Activated CD8-positive, alpha-beta memory T cell treated with anti-CD3 and anti-CD28 coated beads, Interleukin-2, amount 10 ng/mL, durations not matched to agents 7 days and 5 days (primary cell): ENCODE measurements at regions of chr1 and their contacts with region 1.

Region 1: DNA sequence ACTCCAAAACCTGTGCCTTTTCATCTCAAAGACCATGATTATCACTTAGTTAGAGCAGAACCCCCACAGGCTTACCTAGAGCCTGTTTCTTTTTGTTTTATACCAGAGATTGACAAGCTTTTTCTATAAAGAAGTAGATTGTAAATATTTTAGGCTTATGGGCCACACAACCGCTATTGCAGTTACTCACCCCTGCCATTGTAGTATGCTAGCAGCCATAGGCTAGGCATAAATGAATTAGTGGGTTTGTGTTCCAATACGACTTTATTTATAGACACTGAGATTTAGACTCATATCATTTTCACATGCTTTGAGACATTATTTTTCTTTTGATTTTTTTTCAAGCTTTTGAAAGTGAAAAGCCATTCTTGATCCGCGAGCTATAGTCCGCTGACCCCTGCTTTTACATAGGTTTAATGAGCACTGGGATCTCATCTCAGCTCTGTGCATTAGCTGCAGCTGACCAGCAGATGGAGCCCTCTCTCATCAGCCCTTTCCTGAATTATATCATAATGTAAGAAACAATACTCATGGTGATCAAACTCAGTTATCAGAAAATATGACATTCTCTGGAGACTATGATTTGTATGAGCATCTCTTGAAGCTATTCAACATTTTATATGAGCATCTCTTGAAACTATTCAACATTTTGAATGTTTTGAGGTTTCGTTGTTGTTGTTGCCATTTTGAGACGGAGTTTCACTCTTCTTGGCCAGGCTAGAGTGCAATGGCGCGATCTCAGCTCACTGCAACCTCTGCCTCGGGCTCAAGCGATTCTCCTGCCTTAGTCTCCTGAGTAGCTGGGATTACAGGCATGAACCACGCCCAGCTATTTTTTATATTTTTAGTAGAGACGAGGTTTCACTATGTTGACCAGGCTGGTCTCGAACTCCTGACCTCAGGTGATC is 111.9 kb upstream of the L1TD1 start:
- DNase-seq: peak; percentile 55
- ATAC-seq: peak; percentile 65
- H3K4me3 Mint-ChIP-seq: no peak overlapping the region
- H3K27ac Mint-ChIP-seq: no peak overlapping the region
- H3K4me1 Mint-ChIP-seq: no peaks in the 10 kb centered on the region
- H3K27me3 Mint-ChIP-seq: no peaks in the 10 kb centered on the region

Region 2: DNA sequence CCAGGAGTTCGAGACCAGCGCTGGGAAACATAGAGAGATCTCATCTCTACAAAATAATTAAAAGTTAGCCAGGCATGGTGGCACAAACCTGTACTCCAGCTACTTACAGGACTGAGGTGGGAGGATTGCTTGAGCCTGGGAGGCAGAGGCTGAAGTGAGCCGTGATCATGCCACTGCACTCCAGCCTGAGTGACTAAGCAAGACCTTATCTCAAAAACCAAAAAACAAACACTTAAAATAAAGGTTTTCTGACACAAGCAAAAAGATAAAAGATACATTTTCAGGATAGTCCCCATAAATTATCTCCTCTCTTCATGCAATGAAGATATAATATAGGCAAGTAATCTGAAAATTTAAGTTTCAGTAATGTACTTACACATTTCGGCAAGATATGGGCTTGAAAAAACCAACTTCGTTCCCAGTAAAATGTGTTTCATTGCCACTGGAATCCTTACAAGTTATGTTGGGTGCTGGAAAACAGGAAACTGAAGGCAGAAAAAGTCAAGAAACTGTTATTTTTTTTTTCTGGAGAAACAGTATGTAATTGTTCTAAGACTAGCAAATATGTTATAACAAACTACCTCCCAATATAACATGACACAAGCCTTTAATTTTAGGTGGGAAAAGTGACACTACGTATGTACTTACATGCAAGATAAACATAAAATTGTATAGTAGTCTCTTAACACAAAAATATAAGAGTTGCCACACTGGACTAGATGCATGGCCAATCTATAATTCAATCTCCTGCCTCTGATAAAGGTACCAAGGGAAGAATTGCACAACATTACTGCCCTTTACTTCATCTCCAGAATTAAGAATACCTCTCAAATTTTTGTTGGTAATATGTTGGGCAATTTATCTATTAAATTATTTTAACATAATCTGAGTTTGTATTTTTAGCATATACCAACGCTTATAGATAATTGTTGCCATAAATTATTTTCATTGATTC is 373.5 kb before region 1 on chr1:
- CTCF ChIA-PET with region 1: no interaction called
- DNase-seq: no peak
- ATAC-seq: no peak
- H3K4me3 Mint-ChIP-seq: no peak overlapping the region
- H3K27ac Mint-ChIP-seq: no peak overlapping the region
- H3K4me1 Mint-ChIP-seq: peaks cover 2% of the 10 kb centered on the region
- H3K27me3 Mint-ChIP-seq: no peaks in the 10 kb centered on the region

Region 3: DNA sequence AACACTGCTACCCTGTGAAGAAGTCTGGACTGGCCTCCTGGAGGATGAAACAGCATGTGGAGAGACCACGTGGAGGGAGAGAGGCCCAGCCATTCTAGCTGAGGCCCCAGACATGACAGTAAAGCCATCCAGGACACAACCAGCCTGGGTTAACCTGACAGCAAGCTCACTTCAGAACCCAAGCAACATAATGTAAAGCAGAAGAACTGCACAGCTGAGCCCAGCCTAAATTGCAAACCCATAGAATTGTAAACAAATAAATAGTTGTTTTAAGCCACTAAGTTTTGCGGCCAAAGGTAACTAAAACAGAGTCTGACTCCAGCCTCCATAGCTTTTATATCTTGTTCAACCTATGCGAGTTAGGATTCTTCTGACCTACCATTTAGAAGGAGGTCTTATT is 14.8 kb after region 1 on chr1:
- CTCF ChIA-PET with region 1: interaction called, 11 read pairs
- DNase-seq: no peak
- ATAC-seq: no peak
- H3K4me3 Mint-ChIP-seq: no peak overlapping the region
- H3K27ac Mint-ChIP-seq: no peak overlapping the region
- H3K4me1 Mint-ChIP-seq: no peaks in the 10 kb centered on the region
- H3K27me3 Mint-ChIP-seq: no peaks in the 10 kb centered on the region

Region 4: DNA sequence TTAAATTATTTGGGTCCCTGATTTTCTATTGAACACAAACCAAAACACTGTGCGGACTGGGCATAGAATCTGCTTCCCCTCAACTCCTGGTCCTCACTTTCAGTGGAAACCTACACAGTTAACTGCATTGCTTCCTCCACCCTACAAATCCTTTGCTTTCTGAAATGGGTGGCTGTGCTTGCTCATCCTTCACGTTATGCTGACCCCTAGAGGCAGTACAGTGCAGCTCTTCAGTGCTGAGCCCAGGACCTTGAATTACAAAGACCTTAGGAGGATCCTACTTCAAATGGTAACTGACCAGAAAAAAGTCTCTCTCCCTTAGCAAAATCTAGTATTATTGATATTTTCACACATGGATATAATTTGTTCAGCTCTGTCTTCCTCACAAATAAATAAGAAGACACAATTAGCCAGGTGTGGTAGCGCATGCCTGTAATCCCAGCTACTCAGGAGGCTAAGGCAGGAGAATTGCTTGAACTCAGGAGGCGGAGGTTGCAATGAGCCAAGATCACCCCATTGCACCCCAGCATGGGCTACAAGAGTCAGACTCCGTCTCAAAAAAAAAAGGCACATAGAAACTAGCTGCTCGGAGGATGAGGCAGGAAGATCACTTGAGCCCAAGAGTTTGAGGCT is 48.5 kb after region 1 on chr1:
- CTCF ChIA-PET with region 1: interaction called, 31 read pairs
- DNase-seq: peak; percentile 57
- ATAC-seq: peak; percentile 80
- H3K4me3 Mint-ChIP-seq: no peak overlapping the region
- H3K27ac Mint-ChIP-seq: no peak overlapping the region
- H3K4me1 Mint-ChIP-seq: no peaks in the 10 kb centered on the region
- H3K27me3 Mint-ChIP-seq: no peaks in the 10 kb centered on the region

Region 5: DNA sequence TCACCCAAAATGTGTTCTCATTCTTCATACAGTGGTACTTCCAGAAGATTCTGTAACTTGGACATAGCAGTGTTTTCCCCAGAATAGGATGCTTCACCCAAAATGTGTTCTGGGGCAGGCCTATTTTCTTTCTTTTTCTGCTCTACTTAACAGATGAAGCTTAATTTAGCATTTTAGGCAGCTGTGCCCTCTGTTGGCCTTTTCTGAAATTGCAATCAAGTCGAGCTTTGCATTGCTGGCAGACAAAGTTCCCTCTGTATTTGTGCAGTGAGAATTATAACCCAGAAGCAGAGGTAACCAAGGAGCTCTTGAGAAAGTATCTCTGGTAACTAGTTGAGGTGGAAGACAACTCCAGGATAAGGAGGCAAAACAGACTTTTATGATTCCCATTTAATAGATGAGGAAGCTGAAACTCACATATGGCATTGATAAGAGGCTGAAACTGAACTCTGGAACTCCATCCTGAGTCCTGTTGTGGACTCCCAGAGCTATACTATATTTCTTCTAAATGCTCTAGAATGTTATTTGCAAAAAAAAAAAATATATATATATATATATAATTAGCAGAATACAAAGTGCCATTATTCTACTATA is 61.6 kb after region 1 on chr1:
- CTCF ChIA-PET with region 1: interaction called, 19 read pairs
- DNase-seq: peak; percentile 63
- ATAC-seq: peak; percentile 42
- H3K4me3 Mint-ChIP-seq: no peak overlapping the region
- H3K27ac Mint-ChIP-seq: no peak overlapping the region
- H3K4me1 Mint-ChIP-seq: no peaks in the 10 kb centered on the region
- H3K27me3 Mint-ChIP-seq: no peaks in the 10 kb centered on the region